ENCODE measurements at regions of chr7 and their contacts with region 1.

Region 1: GRCh38 chr7:37284805-37285231 is 163.8 kb downstream of the ELMO1 start:
- DNase-seq: peak; percentile 9
- ATAC-seq: peak; percentile 70
- H3K4me3 ChIP-seq: no peak overlapping the region
- H3K27ac ChIP-seq: no peak overlapping the region
- H3K4me1 ChIP-seq: peaks cover 11% of the 10 kb centered on the region
- H3K27me3 ChIP-seq: no peaks in the 10 kb centered on the region
- CTCF ChIP-seq: peak; percentile 87 to 92 (median 87)
- EP300 ChIP-seq: no peak
- POLR2A ChIP-seq: no peak
- RAD21 ChIP-seq: peak; percentile 86

Region 2: GRCh38 chr7:36250317-36250716 is 1034.5 kb before region 1 on chr7:
- CTCF ChIA-PET with region 1: no interaction called
- POLR2A ChIA-PET with region 1: no interaction called
- RAD21 ChIA-PET with region 1: no interaction called
- SMC1A ChIA-PET with region 1: no interaction called
- in situ Hi-C with region 1: no loop called
- intact Hi-C with region 1: no loop called
- DNase-seq: no peak
- ATAC-seq: no peak
- H3K4me3 ChIP-seq: no peak overlapping the region
- H3K27ac ChIP-seq: no peak overlapping the region
- H3K4me1 ChIP-seq: no peaks in the 10 kb centered on the region
- H3K27me3 ChIP-seq: no peaks in the 10 kb centered on the region
- CTCF ChIP-seq: no peak
- EP300 ChIP-seq: no peak
- POLR2A ChIP-seq: no peak
- RAD21 ChIP-seq: no peak

Region 3: GRCh38 chr7:37269711-37270508 is 14.9 kb before region 1 on chr7:
- CTCF ChIA-PET with region 1: interaction called, 12 read pairs
- POLR2A ChIA-PET with region 1: no interaction called
- RAD21 ChIA-PET with region 1: no interaction called
- SMC1A ChIA-PET with region 1: interaction called, 6 read pairs
- in situ Hi-C with region 1: no loop called
- intact Hi-C with region 1: no loop called
- DNase-seq: no peak
- ATAC-seq: no peak
- H3K4me3 ChIP-seq: no peak overlapping the region
- H3K27ac ChIP-seq: no peak overlapping the region
- H3K4me1 ChIP-seq: peaks cover 6% of the 10 kb centered on the region; the same call in 1 of the 2 replicates
- H3K27me3 ChIP-seq: no peaks in the 10 kb centered on the region
- CTCF ChIP-seq: no peak
- EP300 ChIP-seq: no peak
- POLR2A ChIP-seq: no peak
- RAD21 ChIP-seq: no peak

Region 4: DNA sequence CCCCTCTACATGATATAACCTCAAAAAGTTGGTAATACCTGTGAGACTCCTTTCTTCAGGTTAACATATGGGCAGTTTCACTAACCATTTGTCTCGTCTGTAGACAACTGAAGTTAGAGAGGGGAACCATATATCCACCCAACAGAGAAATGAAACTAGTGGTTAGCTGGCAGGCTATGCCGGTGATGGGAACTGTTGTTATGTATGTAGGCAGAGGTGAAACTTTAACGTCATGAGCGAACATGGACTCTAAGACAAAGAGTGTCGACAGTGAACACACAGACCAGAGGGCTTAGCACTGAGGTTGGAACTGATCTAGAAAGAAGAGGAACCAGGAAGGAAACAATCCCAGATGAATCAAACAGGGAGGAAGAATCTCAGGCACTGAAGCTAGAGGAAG is 51.4 kb after region 1 on chr7:
- CTCF ChIA-PET with region 1: interaction called, 298 read pairs
- POLR2A ChIA-PET with region 1: no interaction called
- RAD21 ChIA-PET with region 1: interaction called, 6 read pairs
- SMC1A ChIA-PET with region 1: interaction called, 106 read pairs
- in situ Hi-C with region 1: loop called (anchors 5 kb)
- intact Hi-C with region 1: no loop called
- DNase-seq: peak; percentile 94
- ATAC-seq: peak; percentile 85
- H3K4me3 ChIP-seq: no peak overlapping the region; the same call in 1 of the 2 replicates
- H3K27ac ChIP-seq: peak overlapping the region; percentile 90
- H3K4me1 ChIP-seq: peaks cover 24% of the 10 kb centered on the region
- H3K27me3 ChIP-seq: no peaks in the 10 kb centered on the region
- CTCF ChIP-seq: no peak
- EP300 ChIP-seq: peak; percentile 80 to 82; a peak in 3 of 4 replicates
- POLR2A ChIP-seq: no peak
- RAD21 ChIP-seq: no peak; the same call in 1 of the 2 replicates

Region 5: DNA sequence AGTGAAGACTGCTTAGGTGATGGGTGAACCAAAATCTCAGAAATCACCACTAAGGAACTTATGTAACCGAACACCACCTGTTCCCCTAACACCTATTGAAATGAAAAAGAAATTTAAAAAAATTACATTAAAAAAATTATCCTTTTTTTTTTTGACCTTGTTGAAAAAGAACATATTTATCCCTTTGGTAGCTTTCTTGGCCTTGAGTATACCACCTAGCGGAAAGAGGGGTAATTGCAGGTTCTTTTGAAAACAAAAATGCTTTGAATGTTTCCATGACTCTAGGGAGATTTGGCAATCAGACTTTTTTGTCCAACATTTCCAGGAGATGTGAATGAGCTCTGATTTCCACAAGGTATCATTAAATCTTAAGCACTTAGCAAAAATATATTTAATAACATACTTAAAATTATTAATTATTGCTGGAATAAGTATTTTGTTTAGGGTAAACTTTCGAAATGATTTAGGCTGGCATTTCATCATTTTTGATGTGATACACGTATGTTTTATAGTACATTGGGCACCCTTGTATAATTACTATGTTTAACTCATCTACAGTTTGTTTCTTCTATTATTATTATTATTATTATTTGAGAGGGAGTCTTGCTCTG is 210.9 kb after region 1 on chr7:
- CTCF ChIA-PET with region 1: interaction called, 25 read pairs
- POLR2A ChIA-PET with region 1: no interaction called
- RAD21 ChIA-PET with region 1: interaction called, 14 read pairs
- SMC1A ChIA-PET with region 1: interaction called, 7 read pairs
- in situ Hi-C with region 1: no loop called
- intact Hi-C with region 1: no loop called
- DNase-seq: no peak
- ATAC-seq: peak; percentile 58; the same call in 1 of the 3 replicates
- H3K4me3 ChIP-seq: no peak overlapping the region
- H3K27ac ChIP-seq: no peak overlapping the region
- H3K4me1 ChIP-seq: peaks cover 8% of the 10 kb centered on the region; the same call in 1 of the 2 replicates
- H3K27me3 ChIP-seq: no peaks in the 10 kb centered on the region
- CTCF ChIP-seq: peak; percentile 55 to 72 (median 62)
- EP300 ChIP-seq: no peak
- POLR2A ChIP-seq: no peak
- RAD21 ChIP-seq: peak; percentile 57

Measured in GM12878 (cell line).